CD4-positive, alpha-beta memory T cell (primary cell): ENCODE measurements at regions of chr2 and their contacts with region 1.

Region 1: DNA sequence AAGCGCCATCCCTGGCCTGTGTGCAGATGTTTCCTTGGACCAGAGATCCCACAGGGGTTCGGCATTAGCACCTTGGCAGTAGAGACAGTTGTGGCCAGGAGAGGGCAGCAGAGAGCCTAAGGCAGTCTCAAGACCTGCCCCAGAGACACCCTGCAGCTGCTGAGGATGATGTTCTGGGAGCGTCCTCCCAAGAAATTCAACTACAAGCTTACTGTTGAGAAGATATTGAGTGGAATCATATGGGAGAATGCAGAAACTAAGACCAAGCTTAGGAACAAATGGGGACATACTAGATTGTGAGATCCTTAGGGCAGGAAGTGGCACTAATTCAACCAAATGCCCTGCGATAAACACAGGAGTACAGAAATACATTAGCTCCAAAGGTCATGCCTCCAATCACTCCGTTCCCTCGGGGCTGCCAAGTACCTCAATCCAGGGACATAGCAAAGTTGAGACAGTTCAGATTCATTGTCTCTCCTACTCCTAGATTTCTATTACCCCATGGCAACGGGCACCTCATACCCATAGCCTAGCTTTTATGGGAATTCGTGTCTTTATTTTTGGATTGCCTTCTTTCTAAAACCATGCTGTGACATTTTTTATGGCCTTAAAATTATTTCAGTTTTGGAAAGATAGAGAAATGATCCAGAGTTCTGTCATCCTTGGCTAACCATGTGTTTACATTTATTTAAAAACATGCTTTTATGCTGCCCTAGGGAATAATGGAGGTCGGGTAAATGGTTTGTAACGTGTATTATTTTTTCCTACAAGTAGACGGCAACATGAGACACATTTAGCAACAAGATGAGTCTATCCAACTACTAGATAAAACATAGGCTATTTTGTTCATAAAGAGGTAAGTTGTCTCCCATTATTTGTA is 2.2 kb upstream of the ERMN start:
- DNase-seq: peak; percentile 75 to 83 (median 78)
- H3K4me3 ChIP-seq: peak overlapping the region in 1 of 2 donors; percentile 13
- H3K4me3 Mint-ChIP-seq: peak overlapping the region in 7 of 8 donors; percentile 63 to 75 (median 70)
- H3K27ac ChIP-seq: no peak overlapping the region
- H3K27ac Mint-ChIP-seq: peak overlapping the region; percentile 27 to 91 (median 82)
- H3K4me1 ChIP-seq: peaks cover 42% of the 10 kb centered on the region
- H3K4me1 Mint-ChIP-seq: peaks cover 34 to 49% (median 40%) of the 10 kb centered on the region in 4 donors
- H3K27me3 ChIP-seq: no peaks in the 10 kb centered on the region
- H3K27me3 Mint-ChIP-seq: no peaks in the 10 kb centered on the region

Region 2: DNA sequence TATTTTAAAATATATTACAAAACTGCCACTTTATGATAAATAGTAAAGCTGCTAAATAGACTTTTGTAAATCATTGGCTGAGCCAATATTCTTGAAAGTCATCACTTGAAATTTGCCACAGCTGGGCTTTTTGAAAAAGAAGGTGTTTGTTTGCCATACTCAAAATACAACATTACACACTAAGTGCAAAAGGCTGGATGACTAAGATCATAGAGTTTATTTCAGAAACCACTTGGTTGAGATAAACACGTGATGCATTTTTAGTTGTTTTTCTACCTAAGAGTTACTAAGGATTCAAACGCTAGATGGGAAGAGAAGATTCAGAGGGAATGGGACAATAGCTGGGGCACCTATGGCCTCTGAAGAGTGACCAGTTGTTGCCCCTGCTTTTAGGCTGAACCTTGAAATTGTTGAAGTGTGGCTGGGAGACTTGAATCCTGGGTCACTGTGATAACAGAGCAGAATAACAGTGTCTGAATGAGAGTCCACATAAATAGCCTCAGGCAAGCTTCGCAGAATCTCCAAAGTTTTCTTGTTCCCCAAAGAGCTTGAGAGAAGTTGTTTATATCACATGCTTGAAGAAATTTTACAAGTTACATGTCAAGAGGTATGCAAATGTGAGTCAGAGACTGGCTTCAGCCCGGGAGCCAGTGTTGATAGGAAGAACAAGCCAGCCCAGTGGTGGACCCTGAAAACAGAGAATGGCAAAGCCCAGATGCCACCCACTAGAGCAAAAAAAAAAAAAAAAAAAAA is 481.9 kb before region 1 on chr2:
- CTCF ChIA-PET with region 1: no interaction called
- POLR2A ChIA-PET with region 1: no interaction called
- intact Hi-C with region 1: no loop called
- DNase-seq: no peak
- H3K4me3 ChIP-seq: no peak overlapping the region
- H3K4me3 Mint-ChIP-seq: no peak overlapping the region
- H3K27ac ChIP-seq: no peak overlapping the region
- H3K27ac Mint-ChIP-seq: no peak overlapping the region
- H3K4me1 ChIP-seq: no peaks in the 10 kb centered on the region
- H3K4me1 Mint-ChIP-seq: no peaks in the 10 kb centered on the region
- H3K27me3 ChIP-seq: no peaks in the 10 kb centered on the region
- H3K27me3 Mint-ChIP-seq: peaks cover 0 to 1% of the 10 kb centered on the region in 2 donors

Region 3: DNA sequence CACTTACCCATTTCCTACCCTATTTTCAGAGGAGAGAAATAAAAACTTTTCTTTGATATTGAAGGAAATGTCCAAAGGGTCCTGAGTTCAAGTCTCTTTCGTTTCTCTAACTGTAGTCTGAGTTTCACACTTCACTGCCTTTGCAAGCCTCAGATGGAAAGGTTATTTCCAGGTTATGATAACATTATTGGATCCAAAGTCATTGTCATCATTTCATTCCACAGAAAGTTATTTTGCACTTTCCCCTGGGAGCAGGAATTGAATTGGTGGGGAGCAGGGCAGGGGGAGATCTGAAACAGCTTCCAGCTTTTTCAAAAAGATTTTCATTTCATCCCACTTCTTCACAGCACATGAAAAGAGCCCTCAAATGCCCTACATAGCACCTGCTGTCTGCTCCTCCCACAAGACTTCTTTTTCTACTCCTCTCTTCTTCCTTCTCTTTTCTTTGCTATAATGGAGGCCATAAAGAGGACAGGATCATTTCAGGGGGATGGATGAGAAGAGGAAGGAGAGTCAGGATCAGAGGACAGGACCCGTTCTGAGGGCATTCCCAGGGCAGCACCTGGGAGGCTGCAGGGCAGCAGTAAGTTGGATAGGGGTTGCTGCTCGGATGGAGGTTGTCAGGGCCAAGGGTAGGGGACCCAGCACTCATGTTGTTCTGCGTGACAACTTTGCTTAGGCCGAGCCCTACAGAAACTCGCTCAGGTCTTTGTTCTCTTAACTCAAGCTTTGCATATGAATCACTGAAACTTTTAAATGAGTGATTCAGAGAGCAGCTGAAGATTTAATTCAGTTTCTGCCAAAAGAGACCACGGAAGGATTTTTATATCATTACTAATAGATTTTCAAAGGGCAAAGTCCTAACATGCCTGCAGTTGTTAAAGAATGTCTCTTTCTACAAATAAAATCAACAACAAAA is 81.8 kb before region 1 on chr2:
- CTCF ChIA-PET with region 1: no interaction called
- POLR2A ChIA-PET with region 1: no interaction called
- intact Hi-C with region 1: no loop called
- DNase-seq: no peak
- H3K4me3 ChIP-seq: no peak overlapping the region
- H3K4me3 Mint-ChIP-seq: no peak overlapping the region
- H3K27ac ChIP-seq: no peak overlapping the region
- H3K27ac Mint-ChIP-seq: peak overlapping the region in 1 of 7 donors; percentile 23
- H3K4me1 ChIP-seq: no peaks in the 10 kb centered on the region
- H3K4me1 Mint-ChIP-seq: peaks cover 0 to 5% (median 4%) of the 10 kb centered on the region in 4 donors
- H3K27me3 ChIP-seq: no peaks in the 10 kb centered on the region
- H3K27me3 Mint-ChIP-seq: peaks cover 0 to 3% of the 10 kb centered on the region in 2 donors

Region 4: DNA sequence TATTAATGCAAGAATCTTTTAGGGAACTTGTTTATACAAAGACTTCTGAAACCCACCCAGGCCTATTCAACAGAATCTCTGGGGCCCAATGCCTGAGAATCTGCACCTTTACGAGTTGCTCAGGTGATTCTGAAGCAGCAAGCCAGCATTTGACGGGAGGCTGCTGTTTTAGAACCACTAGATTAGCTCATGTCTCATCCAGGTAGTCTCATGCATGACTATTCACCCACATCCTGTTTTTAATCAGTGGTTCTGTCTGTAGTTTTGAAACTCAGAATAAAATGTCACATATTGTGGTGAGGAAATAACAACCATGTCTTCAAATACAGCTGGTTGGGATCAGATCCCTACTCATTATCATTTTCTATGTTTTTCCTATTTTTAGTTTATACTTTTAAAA is 76.5 kb after region 1 on chr2:
- CTCF ChIA-PET with region 1: interaction called, 42 read pairs
- POLR2A ChIA-PET with region 1: interaction called, 58 read pairs
- intact Hi-C with region 1: loop called (anchors 2 kb)
- DNase-seq: peak; percentile 79 to 87 (median 85)
- H3K4me3 ChIP-seq: no peak overlapping the region
- H3K4me3 Mint-ChIP-seq: peak overlapping the region; percentile 49 to 85 (median 68)
- H3K27ac ChIP-seq: peak overlapping the region; percentile 51
- H3K27ac Mint-ChIP-seq: peak overlapping the region; percentile 95 to 100 (median 99)
- H3K4me1 ChIP-seq: peaks cover 60% of the 10 kb centered on the region
- H3K4me1 Mint-ChIP-seq: peaks cover 52 to 76% (median 63%) of the 10 kb centered on the region in 4 donors
- H3K27me3 ChIP-seq: no peaks in the 10 kb centered on the region
- H3K27me3 Mint-ChIP-seq: no peaks in the 10 kb centered on the region

Region 5: DNA sequence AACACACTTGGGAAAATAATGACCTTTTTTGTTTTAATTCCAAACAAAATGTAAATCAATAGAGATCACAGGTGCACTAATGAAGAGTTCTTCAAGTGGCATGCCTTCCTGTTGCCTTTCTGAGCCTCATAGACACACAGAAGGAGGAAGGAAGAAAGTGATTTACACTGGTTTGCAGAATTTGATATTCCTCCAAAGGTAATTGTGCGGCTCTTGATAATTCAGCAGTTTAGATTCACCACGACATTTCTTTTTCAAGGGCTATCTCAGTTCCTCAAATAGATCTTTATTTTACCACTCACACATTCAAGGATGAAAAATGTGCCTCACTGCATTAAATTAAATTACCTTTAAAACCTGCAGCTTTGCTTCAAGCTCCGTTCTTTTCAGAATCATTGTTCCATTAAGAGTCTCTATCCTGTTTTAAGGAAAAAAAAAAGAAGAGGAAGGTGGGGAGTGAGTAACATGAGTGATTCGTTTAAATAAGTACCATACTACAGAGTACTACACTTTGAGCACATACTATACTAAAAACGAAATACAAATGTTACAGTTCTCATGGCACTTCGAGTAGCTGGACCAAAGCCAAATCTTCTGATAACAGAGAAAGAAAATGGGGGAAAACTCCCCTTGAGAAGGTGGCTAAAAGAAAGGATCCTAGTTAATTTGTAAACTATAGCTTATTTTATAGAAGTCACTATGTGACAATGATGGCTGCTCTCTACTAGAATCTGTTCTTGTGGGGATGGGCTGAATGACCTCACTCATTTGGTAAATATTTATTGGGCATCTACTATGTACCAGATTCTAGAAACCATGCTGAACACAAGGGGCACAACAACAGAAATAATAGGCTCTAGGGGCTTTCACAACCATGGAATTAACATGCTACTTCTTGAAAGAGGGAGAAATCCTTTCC is 99.4 kb after region 1 on chr2:
- CTCF ChIA-PET with region 1: interaction called, 340 read pairs
- POLR2A ChIA-PET with region 1: interaction called, 375 read pairs
- intact Hi-C with region 1: no loop called
- DNase-seq: no peak
- H3K4me3 ChIP-seq: no peak overlapping the region
- H3K4me3 Mint-ChIP-seq: peak overlapping the region in 4 of 8 donors; percentile 14 to 52 (median 41)
- H3K27ac ChIP-seq: no peak overlapping the region
- H3K27ac Mint-ChIP-seq: peak overlapping the region; percentile 38 to 95 (median 73)
- H3K4me1 ChIP-seq: peaks cover 87% of the 10 kb centered on the region
- H3K4me1 Mint-ChIP-seq: peaks cover 46 to 82% (median 69%) of the 10 kb centered on the region in 4 donors
- H3K27me3 ChIP-seq: no peaks in the 10 kb centered on the region
- H3K27me3 Mint-ChIP-seq: no peaks in the 10 kb centered on the region

Region 6: GRCh38 chr2:157480182-157480961 is 152.5 kb after region 1 on chr2:
- CTCF ChIA-PET with region 1: interaction called, 135 read pairs
- POLR2A ChIA-PET with region 1: no interaction called
- intact Hi-C with region 1: no loop called
- DNase-seq: no peak
- H3K4me3 ChIP-seq: no peak overlapping the region
- H3K4me3 Mint-ChIP-seq: no peak overlapping the region
- H3K27ac ChIP-seq: no peak overlapping the region
- H3K27ac Mint-ChIP-seq: peak overlapping the region in 2 of 7 donors; percentile 27 to 47
- H3K4me1 ChIP-seq: peaks cover 8% of the 10 kb centered on the region
- H3K4me1 Mint-ChIP-seq: peaks cover 9 to 26% (median 16%) of the 10 kb centered on the region in 4 donors
- H3K27me3 ChIP-seq: no peaks in the 10 kb centered on the region
- H3K27me3 Mint-ChIP-seq: no peaks in the 10 kb centered on the region

Region 7: DNA sequence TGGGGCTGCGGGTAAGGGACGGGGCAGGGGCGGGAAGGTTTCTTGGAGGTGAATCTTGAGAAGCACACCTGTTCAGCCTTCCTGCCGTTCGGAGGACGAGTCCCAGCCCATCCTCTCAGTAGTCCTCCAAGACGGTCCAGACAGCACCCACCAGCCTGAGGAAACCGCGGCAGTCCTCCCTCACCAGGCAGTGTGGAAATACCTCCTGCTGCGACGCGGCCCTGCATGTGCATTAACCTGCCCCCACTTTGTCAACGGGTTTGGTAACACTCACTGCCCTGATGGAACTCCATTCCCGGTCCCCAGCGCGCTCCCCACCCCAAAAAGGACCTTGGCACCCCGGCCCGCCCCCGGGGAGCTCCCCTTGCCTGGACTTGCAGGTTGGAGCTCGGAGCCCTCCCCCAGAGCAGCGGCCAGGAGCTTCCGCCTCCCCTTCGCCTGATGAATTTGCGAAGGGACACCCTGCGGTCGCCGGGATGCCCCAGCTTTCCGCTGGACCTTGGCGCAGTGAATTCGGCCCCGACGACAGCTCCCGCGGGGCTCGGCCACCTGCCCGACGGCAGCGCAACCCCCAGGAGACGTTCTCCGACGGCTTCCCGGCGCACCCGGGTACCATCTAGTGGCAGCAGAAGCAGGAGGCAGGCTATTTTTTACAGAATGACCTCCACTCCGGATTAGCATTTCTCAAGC is 269.3 kb after region 1 on chr2:
- CTCF ChIA-PET with region 1: interaction called, 94 read pairs
- POLR2A ChIA-PET with region 1: no interaction called
- intact Hi-C with region 1: loop called (anchors 1 kb)
- DNase-seq: peak; percentile 35 to 50 (median 40)
- H3K4me3 ChIP-seq: no peak overlapping the region
- H3K4me3 Mint-ChIP-seq: peak overlapping the region; percentile 44 to 75 (median 56)
- H3K27ac ChIP-seq: no peak overlapping the region
- H3K27ac Mint-ChIP-seq: no peak overlapping the region
- H3K4me1 ChIP-seq: no peaks in the 10 kb centered on the region
- H3K4me1 Mint-ChIP-seq: peaks cover 4 to 10% (median 6%) of the 10 kb centered on the region in 4 donors
- H3K27me3 ChIP-seq: no peaks in the 10 kb centered on the region
- H3K27me3 Mint-ChIP-seq: peaks cover 3 to 4% of the 10 kb centered on the region in 2 donors